CD14-positive monocyte (primary cell): ENCODE measurements at regions of chr2 and their contacts with region 1.

Region 1: GRCh38 chr2:158221063-158222020 is 119.7 kb downstream of the UPP2 start:
- DNase-seq: peak in 1 of 3 donors; percentile 9
- H3K4me3 ChIP-seq: no peak overlapping the region
- H3K4me3 Mint-ChIP-seq: no peak overlapping the region
- H3K27ac ChIP-seq: no peak overlapping the region
- H3K27ac Mint-ChIP-seq: peak overlapping the region in 1 of 7 donors; percentile 80
- H3K4me1 ChIP-seq: peaks cover 21 to 26% of the 10 kb centered on the region in 2 donors
- H3K4me1 Mint-ChIP-seq: peaks cover 16% of the 10 kb centered on the region
- H3K27me3 ChIP-seq: no peaks in the 10 kb centered on the region
- H3K27me3 Mint-ChIP-seq: no peaks in the 10 kb centered on the region
- CTCF ChIP-seq: no peak

Region 2: DNA sequence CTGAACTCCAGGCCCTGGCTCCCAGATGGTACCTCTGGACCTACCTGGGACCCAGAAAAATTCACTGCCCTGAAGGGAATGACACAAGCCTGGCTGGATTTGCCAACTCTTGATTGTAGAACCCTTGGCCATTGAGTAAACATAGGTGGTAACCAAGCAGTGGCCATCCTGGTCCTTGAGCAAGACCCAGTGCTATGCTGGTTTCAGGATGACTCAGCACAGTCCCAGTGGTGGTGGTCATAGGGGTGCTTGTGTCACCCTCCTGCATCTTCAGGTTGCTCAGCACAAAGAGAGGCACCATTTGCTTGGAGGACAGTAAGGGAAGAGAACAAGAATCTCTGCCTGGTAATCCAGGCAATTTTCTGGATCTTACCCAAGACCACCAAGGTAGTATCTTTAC is 66.8 kb before region 1 on chr2:
- intact Hi-C with region 1: loop called in 1 of 2 experiments (anchors 10 kb)
- DNase-seq: peak; percentile 8 to 27 (median 12)
- H3K4me3 ChIP-seq: no peak overlapping the region
- H3K4me3 Mint-ChIP-seq: no peak overlapping the region
- H3K27ac ChIP-seq: no peak overlapping the region
- H3K27ac Mint-ChIP-seq: no peak overlapping the region
- H3K4me1 ChIP-seq: no peaks in the 10 kb centered on the region
- H3K4me1 Mint-ChIP-seq: peaks cover 4% of the 10 kb centered on the region
- H3K27me3 ChIP-seq: no peaks in the 10 kb centered on the region
- H3K27me3 Mint-ChIP-seq: no peaks in the 10 kb centered on the region
- CTCF ChIP-seq: no peak